PC-3 (cell line): ENCODE measurements at regions of chr1 and their contacts with region 1.

Region 1: DNA sequence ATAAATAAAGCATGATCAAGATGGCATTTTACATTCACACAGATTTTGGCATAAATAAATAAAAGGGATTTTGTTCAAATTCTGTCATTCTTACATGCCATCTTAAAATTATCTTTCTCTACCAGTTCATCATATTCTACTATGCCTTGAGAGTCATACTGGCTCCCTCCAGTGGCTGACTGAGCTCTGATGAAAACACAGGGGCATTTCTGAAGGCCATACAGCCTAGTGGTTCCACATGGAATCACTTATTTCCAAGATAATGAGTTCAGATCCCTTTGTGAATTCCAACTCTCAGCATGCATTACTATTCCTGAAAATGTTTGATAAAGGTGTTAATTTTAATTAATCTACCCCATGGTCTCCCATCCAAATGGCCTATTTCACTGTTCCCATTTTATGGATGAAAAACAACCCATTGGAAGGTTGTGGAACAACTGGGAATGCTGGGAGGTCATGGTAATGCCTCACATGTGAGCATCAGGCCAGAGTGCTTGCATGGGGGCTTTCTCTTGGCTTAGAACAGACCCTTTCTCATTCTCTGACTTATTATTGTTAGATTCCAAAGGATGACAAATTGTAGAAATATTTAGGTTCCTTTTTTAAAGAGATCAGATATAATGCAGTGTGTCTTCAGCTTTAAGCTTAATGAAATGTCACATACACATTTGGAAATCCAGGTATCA is 622.4 kb upstream of the PKN2 start:
- DNase-seq: peak; percentile 84
- ATAC-seq: peak; percentile 89
- H3K4me3 ChIP-seq: no peak overlapping the region
- H3K27ac ChIP-seq: no peak overlapping the region
- H3K4me1 ChIP-seq: peaks cover 27% of the 10 kb centered on the region
- H3K27me3 ChIP-seq: no peaks in the 10 kb centered on the region
- CTCF ChIP-seq: peak; percentile 95

Region 2: DNA sequence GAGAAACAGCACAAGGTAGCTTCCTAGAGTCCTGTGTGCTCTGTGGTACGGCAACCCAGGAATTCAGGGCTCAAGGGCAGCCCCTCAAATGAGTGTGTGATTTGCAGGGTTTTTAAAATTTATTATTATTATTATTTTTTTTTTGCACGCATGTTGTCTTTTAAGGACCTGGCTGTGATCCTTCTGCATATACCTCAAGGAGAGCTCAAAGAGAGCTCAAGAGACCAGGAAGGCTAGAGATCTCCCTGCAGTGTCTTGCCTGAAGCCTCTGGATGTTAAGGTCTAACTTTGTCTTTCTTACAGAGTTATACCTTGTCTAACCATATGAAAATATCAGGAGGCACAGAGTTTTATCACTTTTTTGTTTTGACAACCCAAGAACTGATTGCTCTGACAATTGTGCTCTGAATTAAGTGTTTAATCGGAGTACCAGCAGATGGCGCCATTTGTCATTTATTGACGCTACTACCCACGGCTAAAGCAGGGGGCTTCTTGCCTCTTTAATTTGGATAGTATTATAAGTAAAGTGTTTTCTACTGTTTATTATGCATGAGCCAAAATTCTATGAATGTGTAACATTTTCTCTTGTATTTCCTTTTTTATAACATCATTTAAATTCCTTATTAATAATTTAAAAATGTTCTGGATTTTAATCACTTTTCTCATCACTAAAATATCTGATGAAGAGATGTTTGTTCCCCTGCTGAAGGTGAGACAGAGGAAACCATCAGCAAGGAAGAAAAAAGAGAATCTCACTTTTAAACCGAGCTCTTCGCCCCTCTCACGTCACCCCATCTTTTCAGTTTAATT is 768.7 kb before region 1 on chr1:
- CTCF ChIA-PET with region 1: no interaction called
- POLR2A ChIA-PET with region 1: no interaction called
- intact Hi-C with region 1: loop called (anchors 5 kb)
- DNase-seq: peak; percentile 75
- ATAC-seq: peak; percentile 70
- H3K4me3 ChIP-seq: no peak overlapping the region
- H3K27ac ChIP-seq: no peak overlapping the region
- H3K4me1 ChIP-seq: no peaks in the 10 kb centered on the region
- H3K27me3 ChIP-seq: no peaks in the 10 kb centered on the region
- CTCF ChIP-seq: peak; percentile 91

Region 3: DNA sequence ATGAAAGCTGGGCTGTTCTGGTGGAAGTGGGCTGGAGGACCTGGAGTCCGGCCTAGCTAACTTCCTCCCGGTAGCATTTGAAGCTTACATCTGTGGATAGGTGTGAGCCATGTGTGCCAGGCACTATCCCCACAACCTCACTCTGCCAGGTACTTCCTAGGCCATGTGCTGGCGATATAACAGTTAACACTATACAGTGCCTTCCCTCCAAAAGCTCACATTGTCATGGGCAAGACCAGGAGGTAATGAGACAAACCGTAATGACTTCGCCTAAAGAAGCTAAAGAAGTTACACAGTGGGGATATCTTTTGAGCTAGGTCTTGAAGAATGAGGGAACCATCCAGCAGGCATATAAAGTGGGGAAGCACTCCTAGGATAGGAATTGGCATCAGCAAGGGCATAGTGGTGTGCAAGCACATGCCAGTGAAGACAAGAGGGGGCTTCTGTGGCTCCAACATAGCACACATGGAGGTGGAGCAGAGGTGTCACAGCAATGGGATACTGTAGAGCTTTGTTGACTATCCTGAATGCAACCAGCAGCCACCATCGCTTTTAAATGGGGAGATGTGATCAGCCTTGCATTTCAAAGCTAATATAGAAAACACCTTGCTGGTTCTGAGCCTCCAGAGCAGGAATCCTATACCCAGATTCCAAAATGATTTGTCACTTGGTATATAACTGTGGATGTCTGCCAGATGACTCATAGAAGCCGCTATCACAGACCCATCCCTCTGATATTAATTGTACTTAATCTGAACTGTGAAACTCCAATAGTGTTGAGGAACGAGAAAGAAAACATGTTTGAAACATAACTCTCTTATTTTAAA is 266.6 kb before region 1 on chr1:
- CTCF ChIA-PET with region 1: no interaction called
- POLR2A ChIA-PET with region 1: no interaction called
- intact Hi-C with region 1: loop called (anchors 10 kb)
- DNase-seq: peak; percentile 94
- ATAC-seq: peak; percentile 97
- H3K4me3 ChIP-seq: peak overlapping the region; percentile 22; the same call in 1 of the 2 replicates
- H3K27ac ChIP-seq: no peak overlapping the region
- H3K4me1 ChIP-seq: peaks cover 22% of the 10 kb centered on the region
- H3K27me3 ChIP-seq: no peaks in the 10 kb centered on the region
- CTCF ChIP-seq: no peak

Region 4: GRCh38 chr1:88001460-88001859 is 60.2 kb before region 1 on chr1:
- CTCF ChIA-PET with region 1: no interaction called
- POLR2A ChIA-PET with region 1: no interaction called
- intact Hi-C with region 1: loop called (anchors 5 kb)
- DNase-seq: peak; percentile 85
- ATAC-seq: peak; percentile 95
- H3K4me3 ChIP-seq: peak overlapping the region; percentile 23; the same call in 1 of the 2 replicates
- H3K27ac ChIP-seq: peak overlapping the region; percentile 64
- H3K4me1 ChIP-seq: peaks cover 27% of the 10 kb centered on the region
- H3K27me3 ChIP-seq: no peaks in the 10 kb centered on the region
- CTCF ChIP-seq: no peak

Region 5: DNA sequence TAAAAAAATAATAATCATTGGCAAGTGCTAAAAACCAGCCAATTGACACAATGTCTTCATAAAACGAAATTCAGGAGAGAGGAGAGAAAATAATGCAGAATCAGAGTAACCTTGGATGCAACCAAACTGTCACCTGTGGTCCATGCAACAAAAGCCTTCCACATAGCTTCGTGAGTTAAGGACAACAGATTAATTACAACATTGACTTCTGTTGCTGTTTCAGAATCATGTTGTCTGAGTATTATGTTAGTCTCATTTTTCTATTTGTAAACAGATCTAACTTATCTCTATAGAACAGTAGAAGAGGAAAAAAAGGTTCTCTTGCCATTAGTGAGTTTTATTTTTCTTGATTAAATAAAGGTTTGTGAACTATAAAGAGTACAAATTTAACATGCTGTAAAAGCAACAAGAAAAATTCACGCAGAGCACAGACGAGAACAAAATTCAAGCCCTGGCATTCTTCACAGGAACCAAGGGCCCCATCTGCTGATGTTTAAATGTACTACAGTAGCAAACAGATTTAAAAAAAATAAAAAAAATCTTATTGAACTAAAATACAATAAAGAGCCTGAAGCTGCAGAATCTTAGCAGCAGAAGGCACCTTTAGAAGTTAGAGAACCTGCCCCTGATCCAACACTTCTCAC is 241.3 kb after region 1 on chr1:
- CTCF ChIA-PET with region 1: no interaction called
- POLR2A ChIA-PET with region 1: no interaction called
- intact Hi-C with region 1: loop called (anchors 2 kb)
- DNase-seq: peak; percentile 51
- ATAC-seq: peak; percentile 62; the same call in 1 of the 2 replicates
- H3K4me3 ChIP-seq: no peak overlapping the region
- H3K27ac ChIP-seq: no peak overlapping the region
- H3K4me1 ChIP-seq: no peaks in the 10 kb centered on the region
- H3K27me3 ChIP-seq: no peaks in the 10 kb centered on the region
- CTCF ChIP-seq: peak; percentile 65